ENCODE measurements at regions of chr14 and their contacts with region 1.

Region 1: GRCh38 chr14:64294672-64295413 is 672 bp upstream of the ESR2 start:
- DNase-seq: peak; percentile 78
- H3K4me3 Mint-ChIP-seq: peak overlapping the region; percentile 63
- H3K27ac Mint-ChIP-seq: no peak overlapping the region
- H3K4me1 Mint-ChIP-seq: peaks cover 31% of the 10 kb centered on the region
- H3K27me3 Mint-ChIP-seq: peaks cover 44% of the 10 kb centered on the region

Region 2: DNA sequence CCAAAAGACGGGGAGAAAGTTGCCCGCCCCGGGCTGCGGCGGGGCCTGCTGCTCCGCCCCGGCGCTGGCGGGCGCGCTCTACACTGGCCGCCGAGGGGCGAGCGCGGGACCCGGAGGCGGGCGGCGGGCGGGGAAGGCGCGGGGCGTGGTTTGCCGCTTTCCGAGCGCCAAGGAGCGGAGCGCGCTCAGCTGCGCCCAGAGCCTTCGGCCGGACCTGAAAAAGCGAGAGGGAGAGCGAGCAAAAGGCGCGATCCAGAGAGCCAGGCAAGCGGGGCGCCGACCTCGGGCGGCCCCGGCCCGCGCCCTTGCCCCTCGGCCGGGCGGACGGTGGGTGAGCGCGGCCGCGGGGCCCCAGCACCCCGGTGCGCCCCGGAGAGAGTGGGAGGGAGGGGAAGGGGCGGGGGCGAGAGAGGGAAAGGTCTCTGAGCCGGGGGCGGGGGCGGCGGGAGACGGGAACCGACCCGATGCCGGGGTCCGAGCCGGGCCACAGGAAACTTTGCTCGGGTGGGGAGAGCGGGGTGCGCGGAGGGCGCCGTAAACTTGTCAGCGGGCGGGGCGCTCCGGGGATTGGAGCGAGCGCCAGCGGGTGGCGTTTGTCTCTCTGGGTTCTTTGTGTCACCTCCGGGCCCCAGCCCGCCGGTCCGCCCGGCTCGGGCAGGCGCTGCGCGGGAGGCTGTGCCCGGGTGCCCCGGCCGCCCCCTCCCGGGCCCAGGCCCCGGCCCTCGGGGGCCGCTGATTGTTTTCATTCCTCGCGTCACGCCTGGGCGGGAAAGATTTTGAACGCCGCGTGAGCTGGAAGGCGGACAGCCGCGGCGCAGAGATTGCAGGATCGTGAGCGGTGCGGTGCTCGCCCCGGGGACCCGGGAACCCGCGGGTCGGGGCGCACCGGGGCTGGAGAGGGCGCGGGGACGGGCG is 441.8 kb before region 1 on chr14 and contains the start of gene SYNE2:
- intact Hi-C with region 1: loop called (anchors 5 kb)
- DNase-seq: peak; percentile 76
- H3K4me3 Mint-ChIP-seq: peak within 1 kb of the TSS; percentile 93
- H3K27ac Mint-ChIP-seq: peak within 1 kb of the TSS; percentile 89
- H3K4me1 Mint-ChIP-seq: peaks cover 38% of the 10 kb centered on the region
- H3K27me3 Mint-ChIP-seq: peaks cover 46% of the 10 kb centered on the region
- total RNA-seq, gene SYNE2: 15.2 and 16.1 TPM in 2 replicates

Region 3: DNA sequence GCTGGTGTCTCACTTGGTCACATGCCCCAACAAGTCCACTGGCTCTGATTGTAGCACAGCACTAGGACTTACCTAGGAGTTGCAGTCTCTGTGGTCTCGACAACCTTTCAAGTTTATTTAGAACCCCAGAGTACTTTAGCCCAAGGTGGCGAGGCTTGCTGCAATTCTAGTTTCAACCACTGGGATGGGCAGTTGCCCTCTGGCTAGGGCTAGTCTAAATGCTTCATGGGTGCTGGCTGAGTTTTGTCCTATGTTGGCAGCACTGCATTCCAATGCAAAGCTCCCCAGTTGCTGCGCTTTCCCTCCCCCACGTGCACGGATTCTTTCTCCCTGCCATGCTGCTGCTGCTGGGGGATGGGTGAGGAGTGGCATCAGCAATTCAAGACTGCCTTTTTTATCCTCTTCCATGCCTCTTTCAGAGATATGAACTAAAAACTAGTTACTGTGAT is 234.2 kb before region 1 on chr14:
- intact Hi-C with region 1: loop called (anchors 5 kb)
- DNase-seq: no peak
- H3K4me3 Mint-ChIP-seq: no peak overlapping the region
- H3K27ac Mint-ChIP-seq: no peak overlapping the region
- H3K4me1 Mint-ChIP-seq: no peaks in the 10 kb centered on the region
- H3K27me3 Mint-ChIP-seq: no peaks in the 10 kb centered on the region

Region 4: GRCh38 chr14:64117671-64118402 is 177.0 kb before region 1 on chr14:
- intact Hi-C with region 1: no loop called
- DNase-seq: no peak
- H3K4me3 Mint-ChIP-seq: no peak overlapping the region
- H3K27ac Mint-ChIP-seq: no peak overlapping the region
- H3K4me1 Mint-ChIP-seq: no peaks in the 10 kb centered on the region
- H3K27me3 Mint-ChIP-seq: no peaks in the 10 kb centered on the region

Region 5: GRCh38 chr14:64232095-64232838 is 62.6 kb before region 1 on chr14:
- intact Hi-C with region 1: loop called (anchors 1 kb)
- DNase-seq: no peak
- H3K4me3 Mint-ChIP-seq: no peak overlapping the region
- H3K27ac Mint-ChIP-seq: peak overlapping the region; percentile 78
- H3K4me1 Mint-ChIP-seq: peaks cover 25% of the 10 kb centered on the region
- H3K27me3 Mint-ChIP-seq: peaks cover 15% of the 10 kb centered on the region

Region 6: GRCh38 chr14:64272019-64272418 is 22.8 kb before region 1 on chr14:
- intact Hi-C with region 1: no loop called
- DNase-seq: no peak
- H3K4me3 Mint-ChIP-seq: no peak overlapping the region
- H3K27ac Mint-ChIP-seq: no peak overlapping the region
- H3K4me1 Mint-ChIP-seq: peaks cover 8% of the 10 kb centered on the region
- H3K27me3 Mint-ChIP-seq: peaks cover 21% of the 10 kb centered on the region